Posterior vena cava (tissue), 2 donors: ENCODE measurements at regions of chr2 and their contacts with region 1.

Region 1: GRCh38 chr2:67267241-67267640 is 129.9 kb upstream of the ETAA1 start:
- DNase-seq: no peak

Region 2: DNA sequence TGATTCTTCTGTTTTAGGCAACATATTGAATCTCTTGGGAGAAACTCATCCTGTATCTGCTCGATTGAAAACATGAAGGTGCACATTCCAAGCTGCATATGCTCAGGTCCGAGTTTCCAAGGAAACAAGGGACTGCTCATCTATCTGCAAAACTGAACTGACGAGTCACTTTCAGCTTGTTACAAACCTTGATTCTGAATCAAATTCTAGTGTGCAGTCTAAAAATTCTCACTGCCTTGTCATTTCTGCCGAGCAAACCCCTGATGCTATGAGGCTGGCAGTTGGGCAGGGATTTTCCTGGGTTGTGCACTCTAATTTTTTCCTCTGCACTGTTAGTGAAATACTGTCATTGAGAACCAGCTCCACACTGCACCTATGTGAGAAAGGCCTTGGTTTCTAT is 28.6 kb after region 1 on chr2:
- intact Hi-C with region 1: loop called in 1 of 2 experiments (anchors 1 kb)
- DNase-seq: no peak